Activated CD4-positive, alpha-beta memory T cell treated with anti-CD3 and anti-CD28 coated beads for 36 hours (primary cell): ENCODE measurements at regions of chr19 and their contacts with region 1.

Region 1: GRCh38 chr19:37466798-37467607 is at the start of gene ZNF569:
- DNase-seq: peak; percentile 93
- H3K4me3 Mint-ChIP-seq: peak within 1 kb of the TSS; percentile 92
- H3K27ac Mint-ChIP-seq: peak within 1 kb of the TSS; percentile 94
- H3K4me1 Mint-ChIP-seq: peaks cover 29% of the 10 kb centered on the region
- H3K27me3 Mint-ChIP-seq: no peaks in the 10 kb centered on the region
- total RNA-seq, gene ZNF569: 5.3 to 7.2 TPM

Region 2: GRCh38 chr19:36489118-36489919 is 977.7 kb before region 1 on chr19 and contains the start of gene ZNF566:
- CTCF ChIA-PET with region 1: no interaction called
- POLR2A ChIA-PET with region 1: no interaction called
- intact Hi-C with region 1: loop called (anchors 2 kb)
- DNase-seq: peak; percentile 96
- H3K4me3 Mint-ChIP-seq: peak within 1 kb of the TSS; percentile 95
- H3K27ac Mint-ChIP-seq: peak within 1 kb of the TSS; percentile 99
- H3K4me1 Mint-ChIP-seq: peaks cover 23% of the 10 kb centered on the region
- H3K27me3 Mint-ChIP-seq: no peaks in the 10 kb centered on the region
- total RNA-seq, gene ZNF566: 3.8 to 4.6 TPM

Region 3: DNA sequence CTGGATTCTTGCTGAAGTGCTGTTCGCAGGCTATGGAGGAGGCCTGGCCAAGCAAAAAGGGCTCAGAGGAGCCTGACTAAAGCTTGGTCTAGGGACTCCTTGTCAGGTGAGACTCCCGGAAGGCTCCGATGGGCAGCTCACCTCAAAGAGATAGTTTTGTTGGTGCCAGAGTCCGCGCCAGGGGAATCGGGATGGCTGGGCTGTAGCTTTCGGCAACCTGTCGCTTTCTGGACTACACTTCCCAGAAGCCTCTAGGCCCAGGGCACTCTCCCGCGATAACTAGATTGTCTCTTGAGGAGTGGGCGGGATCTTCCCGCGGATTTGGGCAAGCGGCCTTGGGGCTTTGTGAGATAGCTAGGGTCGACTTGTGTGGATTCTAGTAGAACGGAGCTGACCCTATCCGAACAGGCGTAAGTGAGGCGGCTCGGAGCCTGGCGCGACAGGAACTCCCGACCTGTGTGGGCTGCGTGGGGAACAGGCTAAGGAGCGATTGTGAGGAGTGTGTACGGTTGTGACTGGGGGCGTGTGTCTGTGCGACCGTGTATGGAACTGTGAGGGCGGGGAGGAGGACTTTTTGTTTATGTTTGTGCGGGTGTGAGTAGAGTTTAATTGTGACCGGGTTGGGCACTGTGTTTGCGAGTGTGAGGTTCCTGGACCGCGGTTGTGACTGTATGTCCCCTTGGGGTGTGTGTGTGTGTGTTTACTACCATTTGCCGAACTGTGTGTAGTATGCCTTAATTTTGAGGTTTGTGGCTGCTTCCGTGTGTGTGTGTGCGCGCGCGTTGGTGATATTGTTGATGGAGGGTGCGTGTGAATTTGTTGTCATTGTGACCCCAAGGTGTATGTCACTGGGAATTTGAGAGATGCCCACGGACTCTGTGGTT is 616.2 kb before region 1 on chr19 and contains the start of gene ZNF345:
- CTCF ChIA-PET with region 1: no interaction called
- POLR2A ChIA-PET with region 1: no interaction called
- intact Hi-C with region 1: loop called (anchors 1 kb)
- DNase-seq: peak; percentile 92
- H3K4me3 Mint-ChIP-seq: no peak within 1 kb of the TSS
- H3K27ac Mint-ChIP-seq: no peak within 1 kb of the TSS
- H3K4me1 Mint-ChIP-seq: peaks cover 12% of the 10 kb centered on the region
- H3K27me3 Mint-ChIP-seq: no peaks in the 10 kb centered on the region
- total RNA-seq, gene ZNF345: 3.8 to 4.2 TPM

Region 4: DNA sequence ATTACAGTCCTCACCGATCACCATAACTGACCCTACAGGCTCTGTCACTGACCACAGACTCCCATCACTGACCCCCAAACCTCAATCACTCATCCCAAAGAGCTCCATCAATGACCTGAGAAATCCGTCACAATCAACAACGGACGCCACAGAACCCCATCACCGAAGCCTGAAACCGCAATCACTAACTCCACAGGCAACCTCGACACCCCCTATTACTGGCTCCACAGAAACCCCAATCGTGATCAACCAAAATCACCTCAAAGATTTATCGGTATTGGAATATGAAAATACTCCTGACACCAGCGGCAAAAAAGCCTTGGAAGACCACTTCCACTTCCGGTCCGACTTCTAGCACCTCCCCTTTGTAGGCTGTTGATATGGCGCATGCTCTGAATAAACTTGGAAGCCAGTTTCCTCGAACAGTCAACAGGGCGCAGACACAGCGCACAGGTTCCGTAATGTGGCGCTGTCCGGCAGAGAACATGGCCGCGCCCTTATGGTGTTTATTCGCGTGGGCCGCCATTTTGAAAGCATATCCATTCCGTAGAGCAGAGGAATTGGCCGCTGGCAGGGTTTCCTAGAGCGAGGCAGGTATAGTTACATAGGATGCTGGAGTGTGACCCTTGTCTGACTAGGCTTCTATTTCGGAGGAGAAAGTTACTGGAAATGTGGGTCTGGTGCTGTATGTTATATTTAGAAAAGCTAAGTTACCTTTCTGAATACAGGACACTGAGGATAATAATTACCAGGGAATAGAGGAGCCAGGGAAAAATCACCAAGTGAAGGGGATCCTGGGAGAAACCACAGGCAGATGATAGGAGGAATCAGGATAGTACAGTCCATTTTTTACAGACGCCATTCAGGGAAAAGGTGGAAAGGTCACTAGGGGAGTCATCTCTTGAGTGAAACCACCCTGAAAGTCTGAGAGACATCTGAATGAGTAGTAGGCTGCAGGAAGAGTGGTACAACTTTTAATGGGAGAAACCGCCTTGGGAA is 294.3 kb before region 1 on chr19 and contains the start of gene ZNF585A:
- CTCF ChIA-PET with region 1: no interaction called
- POLR2A ChIA-PET with region 1: no interaction called
- intact Hi-C with region 1: loop called (anchors 5 kb)
- DNase-seq: peak; percentile 92
- H3K4me3 Mint-ChIP-seq: no peak within 1 kb of the TSS
- H3K27ac Mint-ChIP-seq: no peak within 1 kb of the TSS
- H3K4me1 Mint-ChIP-seq: no peaks in the 10 kb centered on the region
- H3K27me3 Mint-ChIP-seq: no peaks in the 10 kb centered on the region
- total RNA-seq, gene ZNF585A: 7.5 to 11.9 TPM

Region 5: DNA sequence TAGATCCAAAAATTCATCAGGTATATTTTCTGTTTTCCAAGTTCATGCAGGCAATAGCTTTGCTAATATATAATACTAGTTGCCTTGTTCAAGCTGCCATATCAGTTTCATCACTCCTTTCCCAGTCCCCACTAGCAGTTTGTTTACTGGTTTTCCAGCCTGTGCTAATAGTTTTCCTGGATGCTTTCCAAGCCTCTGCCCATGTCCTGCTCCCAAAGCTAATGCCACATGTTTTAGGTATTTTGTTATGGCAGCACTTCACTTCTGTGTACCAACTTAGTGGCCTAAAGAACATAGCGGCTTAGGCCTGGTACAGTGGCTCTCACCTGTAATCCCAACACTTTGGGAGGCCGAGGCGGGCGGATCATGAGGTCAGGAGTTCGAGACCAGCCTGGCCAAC is 124.2 kb before region 1 on chr19:
- CTCF ChIA-PET with region 1: no interaction called
- POLR2A ChIA-PET with region 1: no interaction called
- intact Hi-C with region 1: no loop called
- DNase-seq: no peak
- H3K4me3 Mint-ChIP-seq: no peak overlapping the region
- H3K27ac Mint-ChIP-seq: no peak overlapping the region
- H3K4me1 Mint-ChIP-seq: peaks cover 8% of the 10 kb centered on the region
- H3K27me3 Mint-ChIP-seq: no peaks in the 10 kb centered on the region

Region 6: DNA sequence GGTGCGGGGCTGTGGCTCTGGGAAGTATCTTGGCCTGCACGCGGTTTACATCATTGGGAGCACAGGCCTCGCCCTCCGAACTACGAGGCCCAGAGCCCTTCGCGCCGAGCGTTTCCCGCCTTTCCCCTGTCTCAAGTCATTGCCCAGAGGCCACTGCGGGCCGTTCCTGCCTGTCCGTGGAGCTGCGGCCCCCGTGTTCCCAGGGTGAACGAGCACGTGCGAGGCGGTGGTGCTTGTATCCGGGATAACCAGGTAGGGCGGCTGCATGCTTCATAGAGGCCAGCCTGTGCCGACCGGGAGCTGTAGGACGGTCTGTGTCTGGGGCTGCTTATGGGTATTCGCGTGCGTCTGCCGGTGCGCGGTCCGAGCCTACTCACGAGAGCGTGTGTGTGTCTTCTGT is 63.6 kb before region 1 on chr19:
- CTCF ChIA-PET with region 1: no interaction called
- POLR2A ChIA-PET with region 1: no interaction called
- intact Hi-C with region 1: no loop called
- DNase-seq: no peak
- H3K4me3 Mint-ChIP-seq: no peak overlapping the region
- H3K27ac Mint-ChIP-seq: no peak overlapping the region
- H3K4me1 Mint-ChIP-seq: no peaks in the 10 kb centered on the region
- H3K27me3 Mint-ChIP-seq: no peaks in the 10 kb centered on the region

Region 7: DNA sequence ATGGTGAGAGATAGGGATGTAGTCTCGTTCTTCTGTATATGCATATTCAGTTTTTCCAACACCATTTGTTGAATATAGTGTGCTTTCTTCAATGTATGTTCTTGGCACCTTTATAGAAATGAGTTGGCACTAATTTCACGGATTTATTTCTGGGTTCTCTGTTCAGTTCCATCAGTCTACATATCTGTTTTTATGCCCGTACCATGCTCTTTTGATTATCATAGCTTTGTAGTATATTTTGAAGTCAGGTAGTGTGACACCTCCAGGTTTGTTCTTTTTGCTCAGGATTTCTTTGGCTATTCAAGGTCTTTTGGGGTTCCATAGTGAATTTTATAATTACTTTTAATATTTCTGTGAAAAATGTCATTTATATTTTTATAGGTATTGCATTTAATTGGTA is 25.2 kb after region 1 on chr19:
- CTCF ChIA-PET with region 1: no interaction called
- POLR2A ChIA-PET with region 1: no interaction called
- intact Hi-C with region 1: no loop called
- DNase-seq: no peak
- H3K4me3 Mint-ChIP-seq: no peak overlapping the region
- H3K27ac Mint-ChIP-seq: no peak overlapping the region
- H3K4me1 Mint-ChIP-seq: no peaks in the 10 kb centered on the region
- H3K27me3 Mint-ChIP-seq: no peaks in the 10 kb centered on the region

Region 8: DNA sequence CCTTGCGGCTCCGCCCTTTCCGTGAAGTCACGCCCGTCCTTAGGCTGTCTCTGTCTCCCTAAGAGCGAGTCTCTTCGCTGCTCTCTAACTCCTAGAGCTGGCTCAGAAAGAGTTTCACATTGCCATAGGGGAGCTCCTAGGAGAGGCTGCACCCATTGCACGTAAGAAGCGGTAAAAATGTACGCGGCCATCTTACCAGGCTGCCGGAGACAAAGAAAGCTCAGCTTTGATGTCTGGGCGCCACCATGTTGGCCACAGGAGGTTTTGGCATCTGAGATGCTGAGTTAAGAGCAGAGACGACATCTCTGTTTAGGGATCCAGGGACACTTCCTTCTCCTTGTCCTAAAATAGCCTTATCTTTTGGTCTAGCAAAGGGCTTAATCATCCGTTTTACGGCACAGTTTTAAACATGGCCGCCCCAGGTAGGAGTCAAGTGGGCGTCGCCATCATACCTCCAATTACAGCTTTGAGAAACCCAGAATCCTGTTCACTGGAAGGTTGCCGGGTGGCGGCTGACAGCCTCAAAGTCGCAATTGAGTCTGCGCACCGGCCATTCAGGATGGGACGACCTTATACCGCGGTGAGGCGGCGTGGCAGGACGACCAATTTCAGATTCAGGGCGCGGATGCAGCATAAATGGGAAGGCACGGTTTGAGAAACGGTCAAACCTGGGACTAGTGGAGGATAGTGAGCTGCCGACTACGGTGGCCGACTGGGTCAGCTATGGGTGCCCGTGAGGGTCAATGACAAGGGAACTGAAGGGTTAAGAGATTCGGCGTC is 39.6 kb after region 1 on chr19 and contains the start of gene ZNF793:
- CTCF ChIA-PET with region 1: interaction called, 3 read pairs
- POLR2A ChIA-PET with region 1: interaction called, 15 read pairs
- intact Hi-C with region 1: loop called (anchors 1 kb)
- DNase-seq: peak; percentile 86
- H3K4me3 Mint-ChIP-seq: no peak within 1 kb of the TSS
- H3K27ac Mint-ChIP-seq: no peak within 1 kb of the TSS
- H3K4me1 Mint-ChIP-seq: no peaks in the 10 kb centered on the region
- H3K27me3 Mint-ChIP-seq: no peaks in the 10 kb centered on the region
- total RNA-seq, gene ZNF793: 2.4 to 3.4 TPM

Region 9: DNA sequence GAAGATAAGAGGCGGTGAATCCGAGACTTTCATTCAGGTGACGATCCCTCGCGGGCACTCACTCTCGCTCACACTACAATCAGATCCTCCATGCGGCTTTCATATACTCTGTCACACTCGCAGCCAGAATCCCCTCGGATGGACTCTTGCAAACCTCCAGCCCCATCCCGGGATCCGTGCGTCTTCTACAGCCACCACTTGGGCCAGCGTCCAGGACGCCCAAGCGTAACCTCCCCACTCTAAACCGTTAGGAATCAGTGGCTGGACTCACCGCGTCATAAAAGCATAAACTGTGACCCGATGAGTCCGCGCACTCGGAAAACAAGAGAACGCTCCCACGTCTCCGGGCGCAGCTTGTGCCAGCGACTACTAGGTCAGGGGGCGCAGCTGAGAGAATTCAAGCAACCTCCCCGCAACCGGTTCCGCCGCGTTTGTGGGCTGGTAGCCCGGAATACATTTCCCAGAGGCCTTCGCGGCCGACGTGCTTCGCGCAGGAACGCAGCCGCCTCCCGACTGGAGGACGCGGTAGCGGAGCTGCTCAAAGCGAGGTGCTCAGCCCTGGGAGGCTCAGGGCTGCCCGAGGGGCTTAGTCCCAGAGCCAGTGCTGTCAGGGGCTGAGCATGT is 225.0 kb after region 1 on chr19:
- CTCF ChIA-PET with region 1: no interaction called
- POLR2A ChIA-PET with region 1: interaction called, 5 read pairs
- intact Hi-C with region 1: loop called (anchors 10 kb)
- DNase-seq: peak; percentile 89
- H3K4me3 Mint-ChIP-seq: peak overlapping the region; percentile 87
- H3K27ac Mint-ChIP-seq: peak overlapping the region; percentile 77
- H3K4me1 Mint-ChIP-seq: peaks cover 9% of the 10 kb centered on the region
- H3K27me3 Mint-ChIP-seq: no peaks in the 10 kb centered on the region